CD4-positive, alpha-beta memory T cell (primary cell): ENCODE measurements at regions of chr14 and their contacts with region 1.

Region 1: DNA sequence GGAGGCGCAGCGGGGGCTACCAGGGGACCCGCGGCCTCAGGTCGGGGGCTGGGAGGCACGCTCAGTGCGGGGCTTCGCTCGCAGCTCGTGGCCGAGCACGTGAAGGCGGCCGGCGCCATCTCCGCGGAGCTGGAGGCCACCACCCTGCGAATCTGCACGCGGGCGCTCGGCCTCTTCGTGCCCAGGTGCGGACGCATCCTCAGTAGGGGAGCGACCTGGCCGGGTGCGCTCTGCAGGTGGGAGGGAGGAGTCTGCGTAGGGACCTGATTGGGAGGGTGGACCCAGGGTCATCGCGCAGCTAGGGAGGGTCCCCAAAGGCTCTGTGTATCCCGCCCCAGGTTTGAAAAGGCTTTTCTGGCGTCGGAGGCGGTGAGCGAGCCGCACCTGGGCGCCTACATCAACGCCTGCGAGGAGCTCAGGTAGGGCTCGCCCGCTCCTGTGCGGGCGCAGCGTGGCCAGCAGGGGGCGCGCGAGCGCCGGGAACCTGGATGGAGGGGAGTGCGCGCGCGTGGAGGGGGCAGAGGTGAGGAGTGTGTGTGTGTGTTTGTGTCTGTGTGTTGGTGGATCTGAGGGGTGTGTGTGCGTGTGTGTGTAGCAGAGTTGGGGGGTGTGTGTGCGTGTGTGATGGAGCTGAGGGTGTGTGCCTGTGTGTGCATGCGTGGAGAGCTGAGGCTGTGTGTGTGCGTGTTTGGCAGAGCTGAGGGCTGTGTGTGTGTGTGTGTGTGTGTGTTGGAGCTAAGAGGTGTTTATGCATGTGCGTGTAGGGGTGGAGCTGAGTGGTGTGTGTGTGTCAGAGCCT is 10.3 kb downstream of the EXOC3L4 start:
- DNase-seq: peak; percentile 61 to 73 (median 68)
- H3K4me3 ChIP-seq: no peak overlapping the region
- H3K4me3 Mint-ChIP-seq: peak overlapping the region in 4 of 8 donors; percentile 29 to 58 (median 52)
- H3K27ac ChIP-seq: no peak overlapping the region
- H3K27ac Mint-ChIP-seq: peak overlapping the region in 3 of 7 donors; percentile 52 to 82 (median 68)
- H3K4me1 ChIP-seq: peaks cover 13% of the 10 kb centered on the region
- H3K4me1 Mint-ChIP-seq: peaks cover 4 to 21% (median 11%) of the 10 kb centered on the region in 4 donors
- H3K27me3 ChIP-seq: peaks cover 8% of the 10 kb centered on the region
- H3K27me3 Mint-ChIP-seq: peaks cover 17 to 20% of the 10 kb centered on the region in 2 donors

Region 2: GRCh38 chr14:102304611-102305509 is 800.0 kb before region 1 on chr14 and contains the start of gene MOK:
- CTCF ChIA-PET with region 1: no interaction called
- POLR2A ChIA-PET with region 1: no interaction called
- intact Hi-C with region 1: no loop called
- DNase-seq: peak; percentile 96 to 98 (median 98)
- H3K4me3 ChIP-seq: peak within 1 kb of the TSS; percentile 73 to 82
- H3K4me3 Mint-ChIP-seq: peak within 1 kb of the TSS; percentile 88 to 98 (median 96)
- H3K27ac ChIP-seq: peak within 1 kb of the TSS; percentile 63
- H3K27ac Mint-ChIP-seq: peak within 1 kb of the TSS; percentile 95 to 100 (median 99)
- H3K4me1 ChIP-seq: peaks cover 5% of the 10 kb centered on the region
- H3K4me1 Mint-ChIP-seq: peaks cover 5 to 11% (median 8%) of the 10 kb centered on the region in 4 donors
- H3K27me3 ChIP-seq: no peaks in the 10 kb centered on the region
- H3K27me3 Mint-ChIP-seq: peaks cover 2 to 6% of the 10 kb centered on the region in 2 donors
- total RNA-seq, gene MOK: 0.73 to 1.3 TPM

Region 3: DNA sequence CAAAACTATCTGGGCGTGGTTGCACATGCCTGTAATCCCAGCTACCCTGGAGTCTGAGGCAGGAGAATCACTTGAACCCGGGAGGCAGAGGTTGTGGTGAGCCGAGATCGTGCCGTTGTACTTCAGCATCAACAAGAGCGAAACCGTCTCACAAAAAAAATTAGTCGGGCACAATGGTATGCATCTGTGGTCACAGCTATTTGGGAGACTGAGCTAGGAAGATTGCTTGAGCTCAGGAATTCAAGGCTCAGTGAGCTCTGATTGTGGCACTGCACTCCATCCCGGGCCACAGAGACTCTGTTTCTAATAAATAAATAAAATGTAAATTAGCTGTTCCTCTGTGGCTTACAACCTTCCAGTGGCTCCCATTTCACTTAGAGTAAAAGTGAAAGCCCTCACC is 484.4 kb before region 1 on chr14:
- CTCF ChIA-PET with region 1: no interaction called
- POLR2A ChIA-PET with region 1: no interaction called
- intact Hi-C with region 1: no loop called
- DNase-seq: no peak
- H3K4me3 ChIP-seq: no peak overlapping the region
- H3K4me3 Mint-ChIP-seq: peak overlapping the region in 1 of 8 donors; percentile 0
- H3K27ac ChIP-seq: no peak overlapping the region
- H3K27ac Mint-ChIP-seq: no peak overlapping the region
- H3K4me1 ChIP-seq: peaks cover 19% of the 10 kb centered on the region
- H3K4me1 Mint-ChIP-seq: peaks cover 32 to 49% (median 38%) of the 10 kb centered on the region in 4 donors
- H3K27me3 ChIP-seq: no peaks in the 10 kb centered on the region
- H3K27me3 Mint-ChIP-seq: no peaks in the 10 kb centered on the region

Region 4: GRCh38 chr14:102811251-102811881 is 293.5 kb before region 1 on chr14:
- CTCF ChIA-PET with region 1: no interaction called
- POLR2A ChIA-PET with region 1: no interaction called
- intact Hi-C with region 1: no loop called
- DNase-seq: no peak
- H3K4me3 ChIP-seq: no peak overlapping the region
- H3K4me3 Mint-ChIP-seq: no peak overlapping the region
- H3K27ac ChIP-seq: no peak overlapping the region
- H3K27ac Mint-ChIP-seq: peak overlapping the region in 5 of 7 donors; percentile 34 to 85 (median 56)
- H3K4me1 ChIP-seq: peaks cover 53% of the 10 kb centered on the region
- H3K4me1 Mint-ChIP-seq: peaks cover 50 to 83% (median 67%) of the 10 kb centered on the region in 4 donors
- H3K27me3 ChIP-seq: no peaks in the 10 kb centered on the region
- H3K27me3 Mint-ChIP-seq: no peaks in the 10 kb centered on the region

Region 5: DNA sequence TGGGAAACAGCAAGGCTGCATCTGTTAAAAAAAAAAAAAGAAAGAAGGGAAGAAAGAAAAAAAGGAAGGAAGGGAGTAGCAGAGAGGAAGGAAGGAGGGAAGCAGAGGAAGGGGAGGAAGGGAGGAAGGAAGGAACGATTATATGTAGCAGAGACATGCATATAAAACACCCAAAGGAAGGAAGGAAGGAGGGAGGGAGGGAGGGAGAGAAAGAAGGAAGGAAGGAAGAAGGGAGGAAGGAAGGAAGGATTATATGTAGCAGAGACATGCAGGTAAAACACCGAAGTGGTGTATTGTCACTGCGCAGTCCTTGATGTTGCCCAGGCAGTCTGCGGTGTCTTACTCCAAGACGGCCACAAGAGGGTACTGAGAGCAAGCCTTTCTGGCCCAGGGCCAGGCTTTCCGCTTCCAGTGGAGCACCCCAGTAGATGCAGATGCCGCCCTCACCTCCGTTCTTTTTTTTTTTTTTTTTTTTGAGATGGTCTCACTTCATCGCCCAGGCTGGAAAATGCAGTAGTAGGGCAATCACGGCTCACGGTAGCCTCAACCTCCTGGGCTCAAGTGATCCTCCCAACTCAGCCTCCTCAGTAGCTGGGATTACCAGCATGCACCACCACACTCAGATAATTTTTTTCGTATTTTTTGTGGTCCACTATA is 26.6 kb before region 1 on chr14:
- CTCF ChIA-PET with region 1: interaction called, 12 read pairs
- POLR2A ChIA-PET with region 1: no interaction called
- intact Hi-C with region 1: no loop called
- DNase-seq: peak; percentile 70 to 84 (median 80)
- H3K4me3 ChIP-seq: no peak overlapping the region
- H3K4me3 Mint-ChIP-seq: peak overlapping the region in 2 of 8 donors; percentile 12 to 37
- H3K27ac ChIP-seq: no peak overlapping the region
- H3K27ac Mint-ChIP-seq: peak overlapping the region in 2 of 7 donors; percentile 43 to 51
- H3K4me1 ChIP-seq: peaks cover 13% of the 10 kb centered on the region
- H3K4me1 Mint-ChIP-seq: peaks cover 0 to 5% (median 0%) of the 10 kb centered on the region in 4 donors
- H3K27me3 ChIP-seq: no peaks in the 10 kb centered on the region
- H3K27me3 Mint-ChIP-seq: peaks cover 0 to 2% of the 10 kb centered on the region in 2 donors

Region 6: GRCh38 chr14:103091041-103091882 is 13.6 kb before region 1 on chr14:
- CTCF ChIA-PET with region 1: interaction called, 36 read pairs
- POLR2A ChIA-PET with region 1: interaction called, 4 read pairs
- intact Hi-C with region 1: no loop called
- DNase-seq: peak; percentile 56 to 78 (median 66)
- H3K4me3 ChIP-seq: peak overlapping the region in 1 of 2 donors; percentile 45
- H3K4me3 Mint-ChIP-seq: peak overlapping the region; percentile 5 to 74 (median 54)
- H3K27ac ChIP-seq: no peak overlapping the region
- H3K27ac Mint-ChIP-seq: peak overlapping the region in 1 of 7 donors; percentile 27
- H3K4me1 ChIP-seq: peaks cover 10% of the 10 kb centered on the region
- H3K4me1 Mint-ChIP-seq: peaks cover 0 to 4% (median 0%) of the 10 kb centered on the region in 4 donors
- H3K27me3 ChIP-seq: no peaks in the 10 kb centered on the region
- H3K27me3 Mint-ChIP-seq: peaks cover 3 to 7% of the 10 kb centered on the region in 2 donors

Region 7: DNA sequence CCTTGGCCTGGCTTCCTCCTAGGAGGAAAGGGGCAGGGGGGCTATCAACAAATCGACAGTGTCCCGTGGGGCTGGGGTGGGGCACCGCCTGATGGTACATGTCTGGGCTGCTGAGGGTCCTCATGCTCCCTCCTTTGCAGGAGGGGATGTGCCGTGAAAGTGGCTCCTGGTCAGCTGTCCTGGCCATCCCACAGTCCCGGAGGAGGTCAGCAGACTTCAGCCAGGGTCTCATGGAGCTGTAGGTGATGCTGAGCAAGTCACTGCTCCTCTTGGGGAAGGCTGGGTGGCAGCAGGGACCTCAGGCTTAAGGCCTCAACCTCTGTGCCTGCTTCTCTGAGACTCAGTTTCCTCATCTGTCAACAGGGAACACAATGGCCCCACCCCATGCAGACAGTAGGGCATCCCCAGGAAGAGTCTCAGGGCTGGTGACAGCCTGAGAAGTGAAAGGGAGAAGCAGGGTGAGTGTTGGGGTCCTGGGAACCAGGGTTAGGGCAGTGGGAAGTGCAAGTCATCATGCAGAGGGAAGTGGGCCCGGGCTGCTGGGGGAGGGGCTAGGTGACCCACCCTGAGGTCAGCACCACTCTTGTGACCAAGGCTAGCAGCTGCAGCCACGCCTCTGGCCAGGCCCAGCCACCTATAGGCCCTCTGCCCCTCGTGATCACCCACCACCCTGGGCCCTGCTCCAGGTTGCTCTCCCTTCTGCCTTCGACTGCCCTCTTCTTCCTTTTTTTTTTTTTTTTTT is 14.0 kb after region 1 on chr14:
- CTCF ChIA-PET with region 1: interaction called, 11 read pairs
- POLR2A ChIA-PET with region 1: no interaction called
- intact Hi-C with region 1: no loop called
- DNase-seq: no peak
- H3K4me3 ChIP-seq: no peak overlapping the region
- H3K4me3 Mint-ChIP-seq: no peak overlapping the region
- H3K27ac ChIP-seq: no peak overlapping the region
- H3K27ac Mint-ChIP-seq: no peak overlapping the region
- H3K4me1 ChIP-seq: peaks cover 12% of the 10 kb centered on the region
- H3K4me1 Mint-ChIP-seq: peaks cover 7 to 10% (median 9%) of the 10 kb centered on the region in 4 donors
- H3K27me3 ChIP-seq: peaks cover under 1% of the 10 kb centered on the region
- H3K27me3 Mint-ChIP-seq: peaks cover 13 to 20% of the 10 kb centered on the region in 2 donors

Region 8: GRCh38 chr14:103160866-103161391 is 56.1 kb after region 1 on chr14:
- CTCF ChIA-PET with region 1: no interaction called
- POLR2A ChIA-PET with region 1: no interaction called
- intact Hi-C with region 1: no loop called
- DNase-seq: no peak
- H3K4me3 ChIP-seq: no peak overlapping the region
- H3K4me3 Mint-ChIP-seq: no peak overlapping the region
- H3K27ac ChIP-seq: no peak overlapping the region
- H3K27ac Mint-ChIP-seq: no peak overlapping the region
- H3K4me1 ChIP-seq: no peaks in the 10 kb centered on the region
- H3K4me1 Mint-ChIP-seq: no peaks in the 10 kb centered on the region
- H3K27me3 ChIP-seq: no peaks in the 10 kb centered on the region
- H3K27me3 Mint-ChIP-seq: peaks cover 8 to 12% of the 10 kb centered on the region in 2 donors

Region 9: GRCh38 chr14:103185051-103185992 is 80.5 kb after region 1 on chr14:
- CTCF ChIA-PET with region 1: interaction called, 4 read pairs
- POLR2A ChIA-PET with region 1: no interaction called
- intact Hi-C with region 1: loop called (anchors 1 kb)
- DNase-seq: peak in 2 of 5 donors; percentile 6
- H3K4me3 ChIP-seq: no peak overlapping the region
- H3K4me3 Mint-ChIP-seq: no peak overlapping the region
- H3K27ac ChIP-seq: no peak overlapping the region
- H3K27ac Mint-ChIP-seq: no peak overlapping the region
- H3K4me1 ChIP-seq: no peaks in the 10 kb centered on the region
- H3K4me1 Mint-ChIP-seq: peaks cover 4 to 11% (median 8%) of the 10 kb centered on the region in 4 donors
- H3K27me3 ChIP-seq: no peaks in the 10 kb centered on the region
- H3K27me3 Mint-ChIP-seq: peaks cover 35 to 46% of the 10 kb centered on the region in 2 donors

Region 10: GRCh38 chr14:103292426-103293374 is 187.8 kb after region 1 on chr14:
- CTCF ChIA-PET with region 1: interaction called, 54 read pairs
- POLR2A ChIA-PET with region 1: no interaction called
- intact Hi-C with region 1: no loop called
- DNase-seq: peak; percentile 56 to 65 (median 57)
- H3K4me3 ChIP-seq: no peak overlapping the region
- H3K4me3 Mint-ChIP-seq: no peak overlapping the region
- H3K27ac ChIP-seq: no peak overlapping the region
- H3K27ac Mint-ChIP-seq: peak overlapping the region in 1 of 7 donors; percentile 13
- H3K4me1 ChIP-seq: no peaks in the 10 kb centered on the region
- H3K4me1 Mint-ChIP-seq: peaks cover 0 to 4% (median 1%) of the 10 kb centered on the region in 4 donors
- H3K27me3 ChIP-seq: no peaks in the 10 kb centered on the region
- H3K27me3 Mint-ChIP-seq: peaks cover 8 to 26% of the 10 kb centered on the region in 2 donors